Panc1 (cell line): ENCODE measurements at regions of chr10 and their contacts with region 1.

Region 1: DNA sequence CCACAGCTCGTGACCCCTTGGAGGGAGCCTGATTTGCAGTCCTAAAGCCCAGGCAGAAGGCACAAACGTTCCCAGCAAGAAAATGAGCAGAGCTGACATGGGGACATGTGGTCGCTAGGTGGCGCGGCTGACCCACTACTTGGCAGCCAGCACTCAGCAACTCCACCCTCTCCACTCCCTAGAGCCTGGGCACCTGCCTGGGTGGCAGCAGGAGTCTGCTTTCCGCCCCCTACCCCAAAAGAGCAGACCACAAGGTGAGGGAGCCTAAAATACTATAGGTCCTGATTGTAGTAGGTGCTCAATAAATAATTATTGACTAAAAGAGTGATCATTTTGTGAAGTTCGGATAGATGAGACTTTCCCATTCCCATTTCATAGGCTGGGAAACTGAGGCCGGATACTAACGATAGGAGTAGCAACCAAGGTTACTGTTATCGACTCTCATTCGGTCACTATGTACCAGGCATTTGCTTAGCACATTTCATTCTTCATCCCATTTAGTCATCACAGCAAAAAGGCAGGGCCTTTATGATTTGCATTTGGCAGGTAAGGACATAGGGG is 57.4 kb downstream of the NEUROG3 start:
- DNase-seq: peak; percentile 55
- ATAC-seq: peak; percentile 91
- H3K4me3 ChIP-seq: no peak overlapping the region
- H3K27ac ChIP-seq: no peak overlapping the region
- H3K4me1 ChIP-seq: no peaks in the 10 kb centered on the region
- H3K27me3 ChIP-seq: no peaks in the 10 kb centered on the region
- CTCF ChIP-seq: peak; percentile 94

Region 2: DNA sequence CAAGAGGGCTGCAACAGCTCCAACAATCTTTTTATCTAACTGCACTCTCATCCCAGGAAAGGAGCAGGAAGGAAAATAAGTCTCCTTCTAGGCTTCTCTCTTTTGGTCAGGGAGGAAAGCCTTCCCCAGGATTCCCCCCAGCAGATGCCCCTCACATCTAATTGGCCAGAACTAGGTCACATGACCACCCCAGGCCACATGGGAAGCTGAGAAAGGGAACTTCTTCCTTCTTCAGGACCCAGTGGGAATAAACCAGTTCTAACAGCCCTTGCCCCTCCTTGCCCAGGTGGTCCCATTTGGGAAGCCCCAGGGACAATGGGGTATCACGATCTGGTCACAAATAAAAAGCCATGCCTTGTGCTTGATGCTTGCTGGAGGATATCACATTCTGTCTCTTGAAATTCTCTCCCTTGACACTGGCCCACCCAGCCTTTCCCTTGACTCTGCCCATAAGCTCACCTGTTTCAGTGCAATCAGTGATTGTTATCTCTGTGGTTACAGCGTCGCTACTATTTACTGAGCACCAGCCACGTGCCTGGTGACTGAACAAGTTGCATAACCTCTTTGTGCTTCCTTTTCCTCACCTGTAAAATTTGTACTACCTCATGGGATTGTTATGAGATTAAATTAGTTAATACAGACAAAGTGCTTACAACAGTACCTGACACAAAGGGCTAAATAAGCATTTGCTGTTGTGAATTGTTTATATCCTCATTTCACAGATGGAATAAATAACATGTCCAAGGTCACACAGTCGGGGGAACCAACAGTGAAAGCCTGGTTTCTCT is 90.1 kb before region 1 on chr10:
- CTCF ChIA-PET with region 1: interaction called, 10 read pairs
- POLR2A ChIA-PET with region 1: no interaction called
- in situ Hi-C with region 1: no loop called
- intact Hi-C with region 1: no loop called
- DNase-seq: no peak
- ATAC-seq: no peak
- H3K4me3 ChIP-seq: no peak overlapping the region
- H3K27ac ChIP-seq: peak overlapping the region; percentile 39; the same call in 1 of the 2 replicates
- H3K4me1 ChIP-seq: peaks cover 25% of the 10 kb centered on the region
- H3K27me3 ChIP-seq: no peaks in the 10 kb centered on the region
- CTCF ChIP-seq: no peak

Region 3: GRCh38 chr10:69639291-69640195 is 123.8 kb after region 1 on chr10:
- CTCF ChIA-PET with region 1: interaction called, 49 read pairs
- POLR2A ChIA-PET with region 1: no interaction called
- in situ Hi-C with region 1: no loop called
- intact Hi-C with region 1: loop called (anchors 10 kb)
- DNase-seq: peak; percentile 51
- ATAC-seq: peak; percentile 79
- H3K4me3 ChIP-seq: no peak overlapping the region
- H3K27ac ChIP-seq: no peak overlapping the region
- H3K4me1 ChIP-seq: no peaks in the 10 kb centered on the region
- H3K27me3 ChIP-seq: no peaks in the 10 kb centered on the region
- CTCF ChIP-seq: peak; percentile 97